BJ (cell line): ENCODE measurements at regions of chr2 and their contacts with region 1.

Region 1: DNA sequence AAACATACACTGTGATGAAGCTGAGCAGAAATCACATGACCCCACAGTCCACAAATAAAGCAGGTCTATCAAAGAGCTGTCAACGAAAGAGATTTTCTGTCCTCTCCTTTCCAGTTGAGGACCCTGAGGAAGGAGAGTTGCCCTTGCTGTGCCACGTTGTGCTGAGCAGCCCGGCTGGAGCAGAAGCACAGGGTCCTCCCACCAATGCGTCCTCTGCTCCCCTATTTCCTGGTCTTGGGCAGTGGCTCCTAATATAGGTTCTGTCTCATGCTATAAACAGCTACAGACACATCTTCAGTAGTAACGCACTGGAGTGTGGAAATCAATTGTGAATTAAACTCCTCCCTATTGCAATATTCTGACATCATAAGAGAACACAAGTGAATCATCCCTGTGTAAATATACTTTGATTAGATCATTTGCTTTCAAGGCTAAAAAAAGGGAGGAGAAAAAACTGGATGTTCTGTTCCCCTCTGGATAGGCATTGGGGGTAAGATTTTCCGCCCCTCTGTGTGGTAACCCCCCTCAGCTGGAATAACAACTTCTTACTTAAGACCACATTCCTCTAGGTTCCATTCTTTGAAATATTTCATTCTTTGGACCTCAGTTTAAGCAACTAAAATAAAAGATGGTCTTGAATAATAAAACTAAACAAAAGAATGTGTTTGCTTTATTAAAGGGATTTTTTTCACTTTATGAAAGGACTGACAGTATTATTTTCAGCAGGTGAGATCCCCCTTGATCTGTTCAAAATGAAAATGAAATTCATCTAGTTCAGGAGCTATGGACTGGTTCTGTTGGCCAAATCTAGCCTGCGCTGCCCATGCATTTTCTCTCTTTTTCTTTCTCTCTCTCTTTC is 8.3 kb upstream of the RHOB start:
- DNase-seq: no peak
- H3K4me3 ChIP-seq: no peak overlapping the region
- H3K27me3 ChIP-seq: peaks cover 1% of the 10 kb centered on the region; the same call in 1 of the 2 replicates
- CTCF ChIP-seq: no peak

Region 2: DNA sequence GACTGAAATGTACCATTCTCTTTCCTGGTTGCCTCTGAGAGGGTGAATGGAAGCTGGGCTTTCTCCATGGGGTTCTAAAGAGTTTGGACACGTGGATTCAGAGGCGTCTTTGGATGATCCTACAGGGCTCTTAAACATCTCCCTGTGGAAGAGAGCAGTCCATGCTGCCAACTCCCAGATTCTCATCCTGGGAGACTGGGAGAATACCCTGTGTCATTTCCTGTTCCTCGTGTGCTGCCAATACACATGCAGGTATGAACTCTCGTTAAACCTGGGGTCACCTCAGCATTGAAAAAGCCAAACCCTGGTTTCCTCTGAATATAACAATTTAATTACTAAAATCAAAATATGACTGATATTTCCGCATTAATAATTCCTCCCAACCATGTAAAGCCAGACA is 1775.9 kb before region 1 on chr2:
- CTCF ChIA-PET with region 1: no interaction called
- POLR2A ChIA-PET with region 1: no interaction called
- DNase-seq: no peak
- H3K4me3 ChIP-seq: no peak overlapping the region
- H3K27me3 ChIP-seq: no peaks in the 10 kb centered on the region
- CTCF ChIP-seq: no peak

Region 3: DNA sequence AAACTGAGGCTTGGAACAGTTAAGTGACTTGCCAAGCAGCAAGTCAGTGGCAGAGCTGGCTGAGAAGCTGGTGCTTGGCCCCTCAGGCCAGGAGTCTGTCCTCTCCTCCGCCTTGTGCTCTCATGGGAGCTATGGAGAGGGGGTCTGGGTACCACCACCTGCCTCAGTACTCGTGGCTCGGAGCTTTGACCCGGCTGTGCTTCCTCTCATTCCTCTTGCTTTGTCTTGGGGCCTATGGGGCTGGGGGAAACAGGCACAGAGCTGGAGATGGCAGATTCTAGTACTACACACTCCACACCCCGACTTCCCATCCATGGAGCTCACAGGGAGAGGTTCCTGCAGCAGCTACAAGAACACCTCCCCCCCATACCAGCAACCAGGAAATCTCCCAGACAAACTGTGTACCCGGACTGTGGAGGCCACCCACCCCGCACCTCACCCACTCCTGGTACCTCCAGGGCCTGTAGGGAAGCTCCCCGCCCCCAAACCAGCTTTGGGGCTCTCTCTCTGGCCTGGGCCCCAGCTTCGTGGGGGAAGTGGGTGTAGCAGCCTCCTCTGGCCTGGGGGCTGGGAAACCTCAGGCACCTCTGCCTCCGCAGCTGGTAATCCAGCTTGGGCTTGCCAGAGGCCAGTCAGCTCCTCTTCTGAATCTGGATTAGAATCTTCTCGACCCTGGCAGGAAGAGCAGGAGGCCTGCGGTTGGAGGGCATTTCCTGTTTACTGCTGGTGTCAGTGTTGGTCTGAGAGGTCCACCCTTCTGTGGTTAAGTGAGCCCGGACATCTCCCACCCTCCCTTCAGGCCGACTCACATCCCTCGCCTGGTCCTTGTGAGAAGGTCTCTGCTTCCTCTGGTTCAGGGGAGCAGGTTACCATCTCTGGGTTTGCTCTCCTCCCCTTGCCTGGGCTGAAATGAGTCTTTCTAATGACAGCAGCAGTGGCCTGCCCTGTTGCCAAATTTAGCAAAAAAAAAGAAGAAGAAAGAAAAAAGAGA is 14.0 kb before region 1 on chr2:
- CTCF ChIA-PET with region 1: interaction called, 12 read pairs
- POLR2A ChIA-PET with region 1: no interaction called
- DNase-seq: peak; percentile 73
- H3K4me3 ChIP-seq: no peak overlapping the region
- H3K27me3 ChIP-seq: peaks cover 7% of the 10 kb centered on the region; the same call in 1 of the 2 replicates
- CTCF ChIP-seq: no peak

Region 4: DNA sequence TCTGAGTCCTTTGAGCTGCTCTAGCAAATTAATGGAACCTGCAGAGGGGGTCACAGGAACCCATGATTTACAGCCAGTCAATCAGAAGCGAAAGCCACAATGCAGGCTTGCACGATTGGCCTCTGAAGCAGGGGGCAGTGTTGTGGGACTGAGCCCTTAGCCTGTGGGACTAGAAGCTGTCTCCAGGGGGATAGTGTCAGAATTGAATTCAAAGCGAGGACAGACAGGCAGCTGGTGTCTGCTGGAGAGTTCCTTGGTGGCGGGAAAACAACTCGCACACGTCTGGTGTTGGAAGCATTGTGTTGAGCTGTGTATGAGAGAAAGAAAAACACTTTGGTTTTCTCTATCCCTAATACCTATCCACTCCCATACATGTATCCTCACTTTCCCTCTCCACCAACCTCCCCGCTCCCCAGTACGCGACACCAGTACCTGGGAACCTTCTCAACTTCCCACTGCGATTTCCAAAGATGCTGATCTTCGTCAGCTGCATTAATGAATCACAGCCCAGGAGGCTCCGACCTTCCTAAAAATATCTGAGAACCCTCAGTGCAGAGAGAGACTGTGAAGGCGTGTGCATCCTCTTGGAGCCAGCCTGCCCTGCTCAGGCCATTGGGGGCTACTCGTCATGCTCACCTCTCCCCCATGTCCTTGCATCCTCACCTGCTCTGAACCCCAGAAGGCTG is 124.1 kb after region 1 on chr2:
- CTCF ChIA-PET with region 1: no interaction called
- POLR2A ChIA-PET with region 1: no interaction called
- DNase-seq: no peak
- H3K4me3 ChIP-seq: no peak overlapping the region
- H3K27me3 ChIP-seq: no peaks in the 10 kb centered on the region
- CTCF ChIP-seq: no peak